ENCODE measurements at regions of chr5 and their contacts with region 1.

Region 1: GRCh38 chr5:165906871-165907270 is 2384.6 kb upstream of the WWC1 start:
- DNase-seq: no peak
- H3K4me3 ChIP-seq: no peak overlapping the region
- CTCF ChIP-seq: no peak
- POLR2A ChIP-seq: no peak

Region 2: GRCh38 chr5:165477546-165477945 is 429.3 kb before region 1 on chr5:
- intact Hi-C with region 1: no loop called
- DNase-seq: no peak
- H3K4me3 ChIP-seq: no peak overlapping the region
- CTCF ChIP-seq: no peak
- POLR2A ChIP-seq: no peak

Region 3: DNA sequence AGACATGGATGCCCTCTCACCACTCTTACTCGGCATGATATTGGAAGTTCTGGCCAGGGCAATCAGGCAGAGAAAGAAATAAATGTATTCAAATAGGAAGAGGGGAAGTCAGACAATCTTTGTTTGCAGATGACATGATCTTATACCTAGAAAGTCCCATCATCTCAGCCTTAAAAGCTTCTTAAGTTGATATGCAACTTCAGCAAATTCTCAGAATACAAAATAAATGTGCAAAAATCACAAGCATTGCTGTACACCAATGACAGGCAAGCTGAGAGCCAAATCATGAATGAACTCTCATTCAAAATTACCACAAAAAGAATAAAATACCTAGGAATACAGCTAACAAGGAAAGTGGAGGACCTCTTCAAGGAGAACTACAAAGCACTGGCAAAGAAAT is 211.1 kb before region 1 on chr5:
- intact Hi-C with region 1: no loop called
- DNase-seq: no peak
- H3K4me3 ChIP-seq: no peak overlapping the region
- CTCF ChIP-seq: no peak
- POLR2A ChIP-seq: no peak

Region 4: GRCh38 chr5:165874851-165875250 is 32.0 kb before region 1 on chr5:
- intact Hi-C with region 1: loop called (anchors 1 kb)
- DNase-seq: no peak
- H3K4me3 ChIP-seq: no peak overlapping the region
- CTCF ChIP-seq: no peak
- POLR2A ChIP-seq: no peak